ENCODE measurements at regions of chr2 and their contacts with region 1.

Region 1: GRCh38 chr2:159168707-159169106 is 117.8 kb downstream of the WDSUB1 start:
- DNase-seq: peak; percentile 65
- H3K4me3 ChIP-seq: no peak overlapping the region
- H3K27ac ChIP-seq: peak overlapping the region; percentile 48
- H3K4me1 ChIP-seq: peaks cover 20% of the 10 kb centered on the region
- H3K27me3 ChIP-seq: no peaks in the 10 kb centered on the region
- CTCF ChIP-seq: peak; percentile 36 to 56
- POLR2A ChIP-seq: no peak

Region 2: DNA sequence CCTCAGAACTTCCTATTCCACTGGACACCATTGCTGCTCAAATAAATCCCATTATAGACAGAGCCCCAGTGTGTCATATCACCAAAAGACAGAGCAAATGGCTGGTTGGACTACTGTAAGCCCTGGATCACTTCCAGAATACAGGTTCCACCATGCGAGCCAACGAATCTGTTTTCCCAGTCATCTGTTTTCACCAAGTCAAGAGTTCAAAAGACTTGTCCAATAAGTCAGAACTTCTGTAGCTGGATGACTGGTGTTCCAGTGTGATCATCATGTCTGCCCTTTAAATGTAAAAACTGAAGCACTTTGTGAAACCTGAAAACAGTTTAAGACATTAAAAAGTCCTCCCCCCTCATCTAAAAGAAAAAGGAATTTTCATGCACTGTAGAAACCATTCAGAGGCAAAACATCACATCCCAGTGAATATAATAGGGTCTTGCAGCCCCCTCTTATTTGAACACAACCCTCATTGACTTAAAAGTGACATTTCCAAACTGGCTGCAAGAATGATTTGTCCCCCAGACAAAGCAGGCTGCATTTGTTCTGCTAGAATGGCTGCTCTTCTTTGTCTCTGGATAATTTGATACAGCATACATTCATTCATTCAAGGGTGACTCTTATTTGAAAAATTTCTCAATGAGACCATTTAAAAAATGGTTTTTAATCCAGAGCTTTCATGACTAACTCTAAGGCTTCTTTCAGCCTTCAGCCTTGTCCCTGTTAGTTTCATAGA is 264.8 kb before region 1 on chr2:
- CTCF ChIA-PET with region 1: interaction called, 14 read pairs
- POLR2A ChIA-PET with region 1: no interaction called
- dilution Hi-C with region 1: no loop called
- intact Hi-C with region 1: loop called (anchors 1 kb)
- DNase-seq: no peak
- H3K4me3 ChIP-seq: no peak overlapping the region
- H3K27ac ChIP-seq: no peak overlapping the region
- H3K4me1 ChIP-seq: no peaks in the 10 kb centered on the region
- H3K27me3 ChIP-seq: no peaks in the 10 kb centered on the region
- CTCF ChIP-seq: no peak
- POLR2A ChIP-seq: no peak

Region 3: DNA sequence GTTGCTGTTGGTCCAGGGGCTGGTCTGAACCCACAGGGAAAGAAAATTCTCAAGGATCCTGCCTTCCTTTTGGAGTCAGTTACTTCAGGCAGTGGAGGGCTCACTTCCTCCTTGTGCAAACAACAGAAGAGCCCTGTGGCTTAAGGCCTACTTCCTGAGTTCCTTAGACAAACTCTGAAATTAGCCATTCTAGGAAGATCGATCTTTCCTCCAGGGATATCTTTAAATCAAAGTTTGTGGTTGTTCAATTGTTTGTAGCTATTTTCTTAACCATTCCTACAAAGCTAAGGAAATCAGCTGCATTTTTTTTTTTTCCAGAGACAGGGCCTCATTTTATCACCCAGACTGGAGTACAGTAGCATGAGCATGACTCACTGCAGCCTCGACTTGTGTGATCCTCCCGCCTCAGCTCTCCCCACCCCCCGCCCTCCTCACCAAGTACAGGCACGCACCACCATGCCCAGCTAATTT is 44.2 kb before region 1 on chr2:
- CTCF ChIA-PET with region 1: interaction called, 35 read pairs
- POLR2A ChIA-PET with region 1: no interaction called
- dilution Hi-C with region 1: no loop called
- intact Hi-C with region 1: loop called (anchors 1 kb)
- DNase-seq: peak; percentile 92
- H3K4me3 ChIP-seq: no peak overlapping the region
- H3K27ac ChIP-seq: peak overlapping the region; percentile 84
- H3K4me1 ChIP-seq: peaks cover 35% of the 10 kb centered on the region
- H3K27me3 ChIP-seq: no peaks in the 10 kb centered on the region
- CTCF ChIP-seq: no peak
- POLR2A ChIP-seq: peak; percentile 52

Region 4: GRCh38 chr2:159140070-159140769 is 28.5 kb before region 1 on chr2:
- CTCF ChIA-PET with region 1: interaction called, 11 read pairs
- POLR2A ChIA-PET with region 1: interaction called, 3 read pairs
- dilution Hi-C with region 1: no loop called
- intact Hi-C with region 1: loop called (anchors 1 kb)
- DNase-seq: peak; percentile 87
- H3K4me3 ChIP-seq: no peak overlapping the region
- H3K27ac ChIP-seq: peak overlapping the region; percentile 93
- H3K4me1 ChIP-seq: peaks cover 60% of the 10 kb centered on the region
- H3K27me3 ChIP-seq: no peaks in the 10 kb centered on the region
- CTCF ChIP-seq: no peak
- POLR2A ChIP-seq: peak; percentile 34

Region 5: GRCh38 chr2:159155320-159155719 is 13.4 kb before region 1 on chr2:
- CTCF ChIA-PET with region 1: interaction called, 17 read pairs
- POLR2A ChIA-PET with region 1: no interaction called
- dilution Hi-C with region 1: no loop called
- intact Hi-C with region 1: loop called (anchors 1 kb)
- DNase-seq: no peak
- H3K4me3 ChIP-seq: no peak overlapping the region
- H3K27ac ChIP-seq: no peak overlapping the region
- H3K4me1 ChIP-seq: peaks cover 38% of the 10 kb centered on the region
- H3K27me3 ChIP-seq: no peaks in the 10 kb centered on the region
- CTCF ChIP-seq: no peak
- POLR2A ChIP-seq: no peak